Astrocyte of the cerebellum (primary cell): ENCODE measurements at regions of chr17 and their contacts with region 1.

Region 1: GRCh38 chr17:40177275-40177874 is at the start of gene RAPGEFL1:
- DNase-seq: no peak
- H3K4me3 ChIP-seq: peak within 1 kb of the TSS; percentile 49
- CTCF ChIP-seq: no peak

Region 2: DNA sequence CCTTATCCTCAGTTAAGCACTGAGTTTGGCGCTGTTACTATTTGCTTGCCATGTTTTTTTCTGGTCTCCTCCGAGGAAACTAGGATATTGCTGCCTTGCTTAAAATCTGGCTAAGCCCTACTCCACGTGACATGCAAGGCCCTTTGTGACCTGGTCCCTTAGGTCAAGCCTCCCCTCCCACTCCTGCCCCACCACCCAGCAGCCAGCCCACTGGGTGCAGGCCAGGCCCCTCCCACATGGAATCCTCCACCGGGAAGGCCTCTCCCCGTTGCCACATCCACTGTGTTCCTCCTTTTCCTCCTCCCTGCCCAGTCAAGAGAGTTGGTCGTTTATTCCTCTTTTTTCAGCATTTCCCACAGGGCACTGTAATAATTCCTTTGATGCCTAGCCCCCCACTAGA is 180.6 kb before region 1 on chr17:
- in situ Hi-C with region 1: loop called (anchors 10 kb)
- DNase-seq: no peak
- H3K4me3 ChIP-seq: no peak overlapping the region
- CTCF ChIP-seq: no peak

Region 3: GRCh38 chr17:40068917-40069750 is 108.2 kb before region 1 on chr17:
- in situ Hi-C with region 1: loop called (anchors 5 kb)
- DNase-seq: no peak
- H3K4me3 ChIP-seq: peak overlapping the region; percentile 12
- CTCF ChIP-seq: no peak

Region 4: DNA sequence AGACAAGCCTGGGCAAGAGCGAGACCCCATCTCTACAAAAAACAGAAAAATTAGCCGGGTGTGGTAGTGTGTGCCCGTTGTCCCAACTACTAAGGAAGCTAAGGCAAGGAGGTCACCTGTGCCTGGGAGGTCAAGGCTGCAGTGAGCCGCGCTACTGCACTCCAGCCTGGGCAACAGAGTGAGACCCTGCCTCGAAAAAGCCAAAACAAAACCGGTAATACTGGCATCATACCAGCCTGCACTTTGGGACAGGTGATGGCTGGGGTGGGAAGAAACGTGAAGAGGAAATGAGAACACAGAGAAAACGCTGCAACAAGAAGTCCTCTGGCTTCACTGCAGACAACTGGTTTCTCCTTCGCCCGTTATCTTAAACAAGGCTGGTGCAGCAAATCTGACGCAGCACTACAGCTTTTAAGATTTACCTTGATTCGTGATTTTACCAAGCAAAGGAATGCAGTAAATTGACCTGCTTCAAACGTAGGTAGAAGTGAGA is 37.8 kb before region 1 on chr17:
- in situ Hi-C with region 1: no loop called
- DNase-seq: no peak
- H3K4me3 ChIP-seq: peak overlapping the region; percentile 73
- CTCF ChIP-seq: no peak